MCF 10A (cell line): ENCODE measurements at regions of chr6 and their contacts with region 1.

Region 1: GRCh38 chr6:149863697-149864577 is at the start of gene LRP11:
- DNase-seq: peak; percentile 87
- H3K4me3 Mint-ChIP-seq: peak within 1 kb of the TSS; percentile 90
- H3K27ac Mint-ChIP-seq: peak within 1 kb of the TSS; percentile 96
- H3K4me1 Mint-ChIP-seq: peaks cover 44% of the 10 kb centered on the region
- H3K27me3 Mint-ChIP-seq: no peaks in the 10 kb centered on the region
- CTCF ChIP-seq: no peak
- total RNA-seq, gene LRP11: 38.1 and 46.1 TPM in 2 replicates

Region 2: DNA sequence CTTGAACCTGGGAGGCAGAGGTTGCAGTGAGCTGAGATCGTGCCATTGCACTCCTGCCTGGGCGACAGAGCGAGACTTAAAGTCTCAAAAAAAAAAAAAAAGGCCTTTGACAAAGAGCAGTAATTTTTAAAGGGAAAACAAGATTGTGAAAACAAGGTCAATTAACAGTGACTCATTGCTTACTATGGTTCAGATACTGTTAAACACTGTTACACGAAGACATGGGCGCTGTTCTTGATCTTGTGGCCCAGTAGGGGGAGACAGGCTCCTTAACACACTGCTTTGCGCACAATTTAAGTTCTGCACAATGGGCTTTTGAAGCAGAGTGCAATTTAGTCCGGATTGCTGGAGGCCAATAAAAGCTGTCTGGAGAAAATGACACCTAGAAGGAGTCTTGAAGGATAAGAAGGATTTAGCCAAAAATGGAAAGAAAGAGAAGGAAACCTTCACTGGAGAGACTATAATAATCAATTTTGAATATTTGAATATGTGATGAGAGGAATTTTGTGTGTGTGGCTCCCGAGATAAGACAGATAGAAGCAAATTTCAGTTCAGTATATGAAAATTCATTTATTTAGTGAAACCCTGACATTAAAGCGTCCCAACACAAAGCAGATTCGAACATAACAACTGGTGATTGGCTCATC is 140.0 kb before region 1 on chr6:
- CTCF ChIA-PET with region 1: interaction called, 3 read pairs
- POLR2A ChIA-PET with region 1: no interaction called
- intact Hi-C with region 1: loop called (anchors 10 kb)
- DNase-seq: peak; percentile 87
- H3K4me3 Mint-ChIP-seq: no peak overlapping the region
- H3K27ac Mint-ChIP-seq: no peak overlapping the region
- H3K4me1 Mint-ChIP-seq: peaks cover 6% of the 10 kb centered on the region
- H3K27me3 Mint-ChIP-seq: no peaks in the 10 kb centered on the region
- CTCF ChIP-seq: peak; percentile 82

Region 3: DNA sequence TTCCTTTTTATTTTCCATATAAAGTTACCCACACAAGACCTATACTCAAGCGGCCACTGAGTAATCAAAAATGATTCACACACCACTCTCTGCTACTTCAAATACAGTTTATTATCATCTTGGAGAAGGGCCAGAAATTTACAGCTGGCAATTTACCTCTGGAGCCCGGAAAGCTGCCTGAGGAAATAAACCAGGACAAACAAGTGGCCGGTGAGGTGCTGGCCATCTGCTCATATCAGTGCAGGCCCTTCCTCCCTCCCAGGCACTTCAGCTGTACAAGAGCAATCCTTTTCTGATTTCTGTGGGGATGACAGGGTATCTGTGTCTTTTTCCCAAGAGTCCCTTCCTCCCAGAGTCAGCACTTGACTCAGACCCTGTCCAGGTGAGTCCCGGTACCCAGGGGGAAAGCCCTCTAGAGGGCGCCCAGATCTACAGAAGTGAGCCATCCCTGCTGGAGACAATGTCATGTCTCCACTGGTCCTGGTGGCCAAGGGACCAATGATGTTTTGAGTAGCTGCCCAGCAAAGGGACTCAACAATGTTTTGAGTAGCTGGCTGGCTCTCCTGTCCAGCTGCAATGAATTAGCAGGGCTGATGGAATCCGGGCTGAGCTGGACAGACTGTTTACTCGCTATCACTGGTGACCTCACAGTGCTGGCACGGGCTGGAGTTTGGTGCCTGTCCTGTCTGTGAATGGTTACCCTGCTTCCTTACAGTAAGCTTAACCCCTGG is 23.4 kb before region 1 on chr6:
- CTCF ChIA-PET with region 1: interaction called, 60 read pairs
- POLR2A ChIA-PET with region 1: interaction called, 255 read pairs
- intact Hi-C with region 1: loop called (anchors 1 kb)
- DNase-seq: peak; percentile 79
- H3K4me3 Mint-ChIP-seq: no peak overlapping the region
- H3K27ac Mint-ChIP-seq: no peak overlapping the region
- H3K4me1 Mint-ChIP-seq: peaks cover 14% of the 10 kb centered on the region
- H3K27me3 Mint-ChIP-seq: no peaks in the 10 kb centered on the region
- CTCF ChIP-seq: peak; percentile 76

Region 4: DNA sequence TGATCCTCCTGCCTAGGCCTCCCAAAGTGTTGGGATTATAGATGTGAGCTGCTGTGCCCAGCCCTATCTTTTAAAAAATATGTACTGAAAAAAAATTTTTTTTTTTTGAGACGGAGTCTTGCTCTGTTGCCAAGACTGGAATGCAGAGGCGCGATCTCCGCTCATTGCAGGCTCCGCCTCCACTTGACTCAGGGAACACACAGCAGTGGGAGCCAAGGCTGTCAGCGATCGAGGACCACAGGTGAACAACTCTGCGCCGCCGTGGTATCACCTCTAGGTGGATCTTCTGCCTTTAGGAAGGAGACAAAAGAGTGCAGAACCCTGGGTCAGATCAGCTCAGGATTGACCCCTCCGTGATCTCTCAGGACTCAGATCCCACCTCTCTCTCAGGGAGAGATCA is 20.3 kb after region 1 on chr6:
- CTCF ChIA-PET with region 1: interaction called, 10 read pairs
- POLR2A ChIA-PET with region 1: interaction called, 104 read pairs
- intact Hi-C with region 1: no loop called
- DNase-seq: no peak
- H3K4me3 Mint-ChIP-seq: no peak overlapping the region
- H3K27ac Mint-ChIP-seq: peak overlapping the region; percentile 32
- H3K4me1 Mint-ChIP-seq: peaks cover 28% of the 10 kb centered on the region
- H3K27me3 Mint-ChIP-seq: no peaks in the 10 kb centered on the region
- CTCF ChIP-seq: no peak

Region 5: GRCh38 chr6:149895833-149896271 is 31.9 kb after region 1 on chr6:
- CTCF ChIA-PET with region 1: interaction called, 7 read pairs
- POLR2A ChIA-PET with region 1: interaction called, 104 read pairs
- intact Hi-C with region 1: loop called (anchors 2 kb)
- DNase-seq: peak; percentile 92
- H3K4me3 Mint-ChIP-seq: peak overlapping the region; percentile 41
- H3K27ac Mint-ChIP-seq: peak overlapping the region; percentile 85
- H3K4me1 Mint-ChIP-seq: peaks cover 69% of the 10 kb centered on the region
- H3K27me3 Mint-ChIP-seq: no peaks in the 10 kb centered on the region
- CTCF ChIP-seq: no peak